Activated naive CD4-positive, alpha-beta T cell treated with anti-CD3 and anti-CD28 coated beads for 36 hours (primary cell): ENCODE measurements at regions of chr13 and their contacts with region 1.

Region 1: GRCh38 chr13:96020155-96020575 is 33.0 kb downstream of the UGGT2 start:
- DNase-seq: peak; percentile 25
- H3K4me3 Mint-ChIP-seq: no peak overlapping the region
- H3K27ac Mint-ChIP-seq: no peak overlapping the region
- H3K4me1 Mint-ChIP-seq: no peaks in the 10 kb centered on the region
- H3K27me3 Mint-ChIP-seq: no peaks in the 10 kb centered on the region

Region 2: DNA sequence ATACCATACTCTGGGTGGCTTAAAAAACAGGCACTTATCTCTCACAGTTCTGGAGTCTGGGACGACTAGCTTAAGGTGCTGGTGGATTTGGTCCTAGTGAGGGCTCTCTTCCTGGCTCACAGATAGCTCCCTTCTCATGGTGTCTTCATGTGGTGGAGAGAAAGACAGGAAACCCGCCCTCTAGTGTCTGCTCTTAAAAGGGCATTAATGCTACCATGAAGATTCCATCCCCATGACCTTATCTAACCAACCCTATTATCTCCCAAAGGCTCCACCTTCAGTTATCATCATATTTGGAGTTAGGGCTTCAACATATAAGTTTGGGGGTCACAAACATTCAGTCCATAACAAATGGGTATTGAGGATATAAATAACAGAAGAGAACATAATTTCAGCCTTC is 209.2 kb after region 1 on chr13:
- CTCF ChIA-PET with region 1: no interaction called
- intact Hi-C with region 1: loop called (anchors 10 kb)
- DNase-seq: no peak
- H3K4me3 Mint-ChIP-seq: no peak overlapping the region
- H3K27ac Mint-ChIP-seq: no peak overlapping the region
- H3K4me1 Mint-ChIP-seq: no peaks in the 10 kb centered on the region
- H3K27me3 Mint-ChIP-seq: no peaks in the 10 kb centered on the region

Region 3: GRCh38 chr13:96817336-96817941 is 797.3 kb after region 1 on chr13:
- CTCF ChIA-PET with region 1: interaction called, 6 read pairs
- intact Hi-C with region 1: loop called (anchors 1 kb)
- DNase-seq: no peak
- H3K4me3 Mint-ChIP-seq: no peak overlapping the region
- H3K27ac Mint-ChIP-seq: no peak overlapping the region
- H3K4me1 Mint-ChIP-seq: no peaks in the 10 kb centered on the region
- H3K27me3 Mint-ChIP-seq: no peaks in the 10 kb centered on the region

Region 4: GRCh38 chr13:96958286-96958891 is 938.2 kb after region 1 on chr13:
- CTCF ChIA-PET with region 1: interaction called, 4 read pairs
- intact Hi-C with region 1: loop called (anchors 5 kb)
- DNase-seq: no peak
- H3K4me3 Mint-ChIP-seq: no peak overlapping the region
- H3K27ac Mint-ChIP-seq: no peak overlapping the region
- H3K4me1 Mint-ChIP-seq: no peaks in the 10 kb centered on the region
- H3K27me3 Mint-ChIP-seq: peaks cover 5% of the 10 kb centered on the region

Region 5: GRCh38 chr13:97030705-97031452 is 1010.7 kb after region 1 on chr13:
- CTCF ChIA-PET with region 1: no interaction called
- intact Hi-C with region 1: loop called (anchors 1 kb)
- DNase-seq: no peak
- H3K4me3 Mint-ChIP-seq: no peak overlapping the region
- H3K27ac Mint-ChIP-seq: no peak overlapping the region
- H3K4me1 Mint-ChIP-seq: no peaks in the 10 kb centered on the region
- H3K27me3 Mint-ChIP-seq: peaks cover 13% of the 10 kb centered on the region